Panc1 (cell line): ENCODE measurements at regions of chr5 and their contacts with region 1.

Region 1: DNA sequence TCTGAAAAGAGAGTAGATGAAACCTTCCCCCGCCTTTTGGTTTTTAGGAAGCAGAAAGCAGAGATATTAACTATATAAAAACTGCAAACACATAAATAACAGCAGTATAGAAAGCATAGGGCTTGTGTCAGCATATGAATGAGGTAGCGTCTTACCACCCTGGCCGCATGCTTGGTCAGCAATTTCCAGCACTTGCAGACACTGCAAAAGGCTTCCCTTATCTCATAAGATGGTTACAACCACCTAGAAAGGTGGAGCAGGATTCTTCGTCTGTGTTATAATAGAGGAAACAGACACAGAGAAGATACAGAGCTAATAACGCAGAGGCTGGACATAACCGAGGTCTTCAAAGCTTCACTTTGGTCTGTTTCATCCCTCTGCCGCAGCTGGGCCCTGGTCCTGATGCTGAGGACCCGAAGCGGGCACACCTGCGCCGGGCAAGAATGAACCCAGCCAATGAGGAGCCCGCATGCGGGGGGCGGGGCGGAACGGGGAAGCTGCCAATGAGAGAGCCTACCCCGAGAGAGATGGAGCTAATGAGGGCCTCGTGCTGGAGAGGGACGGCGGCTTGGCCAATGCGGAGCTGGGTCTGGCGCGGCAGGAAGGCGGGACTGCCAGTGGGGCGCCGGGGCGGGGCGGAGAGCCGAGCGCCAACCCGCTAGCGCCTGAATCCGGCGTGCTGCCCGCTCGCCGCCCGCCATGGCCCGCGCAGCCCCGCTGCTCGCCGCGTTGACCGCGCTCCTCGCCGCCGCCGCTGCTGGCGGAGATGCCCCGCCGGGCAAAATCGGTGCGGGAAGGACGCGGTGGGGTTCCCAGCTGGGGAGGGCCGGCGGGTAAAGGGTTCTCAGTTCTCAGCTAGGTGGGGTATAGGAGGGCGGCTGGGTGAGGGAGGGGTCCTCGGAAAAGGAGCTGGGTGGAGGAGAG is at the start of gene PCYOX1L:
- DNase-seq: peak; percentile 73
- ATAC-seq: peak; percentile 100
- H3K4me3 ChIP-seq: peak within 1 kb of the TSS; percentile 72 to 82
- H3K27ac ChIP-seq: peak within 1 kb of the TSS; percentile 74
- H3K4me1 ChIP-seq: peaks cover 10% of the 10 kb centered on the region
- H3K27me3 ChIP-seq: no peaks in the 10 kb centered on the region
- CTCF ChIP-seq: no peak
- total RNA-seq, gene PCYOX1L: 7.0 TPM

Region 2: DNA sequence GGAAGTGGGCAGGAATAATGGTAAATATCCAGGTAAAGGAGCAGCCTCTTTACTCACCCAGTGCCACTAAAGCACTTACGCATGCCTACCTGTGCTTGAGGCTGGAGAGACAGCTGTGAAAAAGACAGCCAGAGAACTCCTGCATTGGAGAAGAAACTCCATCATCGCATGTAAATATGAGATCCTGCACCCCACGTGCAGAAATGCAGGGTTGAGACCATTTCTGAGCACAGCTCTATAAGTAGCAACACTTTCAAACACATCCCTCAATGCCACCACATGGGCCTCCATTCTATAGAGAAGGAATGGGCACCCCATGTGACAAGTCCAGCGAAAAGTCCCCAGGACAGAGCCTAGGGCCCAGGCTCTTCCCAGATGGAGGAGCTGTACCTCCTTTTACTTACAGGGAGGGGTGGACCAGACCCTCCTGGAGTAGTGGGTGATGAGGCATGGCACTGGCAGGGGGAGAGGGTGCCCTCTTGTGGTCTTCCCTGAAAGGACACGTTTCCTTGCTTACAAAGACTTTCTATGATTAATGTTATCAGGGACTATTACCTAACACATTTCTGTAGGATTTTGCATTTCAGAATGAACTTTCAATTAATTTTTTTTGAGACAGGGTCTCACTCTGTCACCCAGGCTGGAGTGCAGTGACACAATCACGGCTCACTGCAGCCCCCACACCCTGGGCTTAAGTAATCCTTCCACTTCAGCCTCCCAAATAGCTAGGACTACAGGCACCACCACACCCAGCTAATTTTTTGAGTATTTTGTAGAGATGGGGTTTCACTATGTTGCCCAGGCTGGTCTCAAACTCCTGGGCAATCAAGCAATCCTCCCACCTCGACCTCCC is 76.8 kb after region 1 on chr5:
- CTCF ChIA-PET with region 1: no interaction called
- POLR2A ChIA-PET with region 1: interaction called, 12 read pairs
- in situ Hi-C with region 1: no loop called
- intact Hi-C with region 1: no loop called
- DNase-seq: peak; percentile 50
- ATAC-seq: peak; percentile 68
- H3K4me3 ChIP-seq: no peak overlapping the region
- H3K27ac ChIP-seq: no peak overlapping the region
- H3K4me1 ChIP-seq: peaks cover 4% of the 10 kb centered on the region; the same call in 1 of the 2 replicates
- H3K27me3 ChIP-seq: no peaks in the 10 kb centered on the region
- CTCF ChIP-seq: peak; percentile 97